ENCODE measurements at regions of chr17 and their contacts with region 1.

Region 1: DNA sequence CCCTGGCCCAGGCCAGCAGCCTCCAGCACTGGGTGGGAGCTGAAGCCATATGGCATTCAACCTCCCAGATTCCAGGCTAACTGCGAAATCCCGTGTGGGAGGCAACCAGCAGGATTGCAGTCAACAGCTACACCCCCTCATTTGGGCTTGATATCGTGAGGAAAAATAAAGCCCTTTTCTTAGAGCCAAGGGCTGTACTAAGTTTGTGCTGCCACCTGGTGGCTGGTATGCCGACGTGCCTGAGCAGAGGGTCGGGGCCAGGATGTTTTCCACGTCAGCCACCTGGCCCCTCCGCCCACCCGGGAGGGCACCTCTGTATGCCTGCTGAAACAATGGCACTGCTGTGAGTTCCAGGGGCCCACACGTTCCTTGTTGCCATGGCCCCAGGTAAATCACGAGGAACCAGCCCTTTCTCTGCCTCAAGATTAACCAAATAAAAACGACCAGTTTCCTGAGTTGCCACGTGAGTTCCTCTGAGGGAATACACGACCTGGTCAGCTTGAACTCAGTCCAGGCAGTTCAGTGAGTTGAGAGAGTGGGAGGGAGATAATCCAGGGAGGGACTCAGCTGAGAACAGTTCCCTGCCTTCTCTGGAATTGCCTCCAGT is 9.0 kb downstream of the TMEM98 start:
- DNase-seq: peak; percentile 90
- H3K4me3 ChIP-seq: no peak overlapping the region
- H3K27ac ChIP-seq: peak overlapping the region; percentile 61
- H3K4me1 ChIP-seq: peaks cover 10% of the 10 kb centered on the region
- H3K27me3 ChIP-seq: no peaks in the 10 kb centered on the region
- CTCF ChIP-seq: peak; percentile 88 to 89
- POLR2A ChIP-seq: no peak

Region 2: DNA sequence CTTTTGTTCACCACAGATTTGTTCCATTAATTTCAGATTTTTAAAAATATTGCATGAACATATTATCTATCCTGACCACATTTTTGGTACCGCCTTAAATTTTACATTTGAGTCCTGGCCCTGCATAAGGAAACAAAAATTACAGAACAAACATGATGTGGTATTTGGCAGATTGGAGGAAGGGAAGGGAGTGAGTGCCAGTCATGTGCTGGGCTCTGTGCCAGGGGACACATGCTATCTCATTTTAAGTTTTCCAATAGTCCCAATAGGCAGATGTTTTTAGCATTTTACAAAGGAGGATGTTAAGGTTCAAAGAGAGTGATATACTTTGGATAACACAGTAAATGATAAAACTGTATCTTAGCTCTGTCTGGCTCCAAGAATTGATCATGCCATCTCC is 265.1 kb before region 1 on chr17:
- CTCF ChIA-PET with region 1: no interaction called
- POLR2A ChIA-PET with region 1: no interaction called
- dilution Hi-C with region 1: no loop called
- intact Hi-C with region 1: loop called (anchors 10 kb)
- DNase-seq: peak; percentile 62
- H3K4me3 ChIP-seq: no peak overlapping the region
- H3K27ac ChIP-seq: no peak overlapping the region
- H3K4me1 ChIP-seq: peaks cover 14% of the 10 kb centered on the region
- H3K27me3 ChIP-seq: no peaks in the 10 kb centered on the region
- CTCF ChIP-seq: no peak
- POLR2A ChIP-seq: no peak

Region 3: GRCh38 chr17:32915245-32915644 is 21.8 kb before region 1 on chr17:
- CTCF ChIA-PET with region 1: interaction called, 20 read pairs
- POLR2A ChIA-PET with region 1: no interaction called
- dilution Hi-C with region 1: no loop called
- intact Hi-C with region 1: loop called (anchors 1 kb)
- DNase-seq: no peak
- H3K4me3 ChIP-seq: no peak overlapping the region
- H3K27ac ChIP-seq: no peak overlapping the region
- H3K4me1 ChIP-seq: peaks cover 7% of the 10 kb centered on the region
- H3K27me3 ChIP-seq: peaks cover 0 to 8% of the 10 kb centered on the region in 2 experiments
- CTCF ChIP-seq: no peak
- POLR2A ChIP-seq: no peak